ENCODE measurements at regions of chr7 and their contacts with region 1.

Region 1: DNA sequence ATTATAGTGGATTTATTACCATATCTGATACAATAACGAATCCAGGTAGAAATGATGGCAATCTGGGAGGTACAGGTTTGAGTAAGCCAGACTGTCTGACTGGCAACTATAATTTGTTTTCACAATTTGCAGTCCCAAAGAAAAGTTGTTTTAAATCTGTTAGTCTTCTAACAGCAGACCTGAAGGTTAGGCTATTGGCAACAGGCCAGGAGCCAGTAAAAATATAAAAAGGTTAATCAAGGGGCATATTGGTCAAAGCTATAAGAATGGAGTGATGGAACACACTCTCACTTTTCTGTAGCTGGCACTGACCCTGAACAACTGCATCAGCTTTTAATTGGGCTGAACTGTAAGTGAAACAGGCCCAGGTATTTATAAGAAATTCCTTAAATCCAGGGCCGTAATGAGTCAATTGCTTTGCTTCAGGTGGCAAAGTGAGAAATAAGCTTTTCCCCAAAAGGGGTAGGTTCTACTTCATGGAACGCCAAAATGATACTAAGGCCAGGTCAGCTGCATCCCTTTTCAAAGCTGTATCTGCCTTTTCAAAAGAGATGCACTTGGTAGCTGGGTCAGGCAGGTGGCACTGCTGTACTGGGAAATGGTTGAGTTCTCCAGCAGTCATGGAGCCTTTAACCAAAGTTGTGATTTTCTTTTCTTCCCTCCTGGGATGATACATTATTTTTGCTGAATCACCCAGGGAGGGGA is 7.0 kb upstream of the GPR22 start:
- DNase-seq: peak in 1 of 2 experiments; percentile 10
- H3K4me3 ChIP-seq: no peak overlapping the region
- H3K27ac ChIP-seq: no peak overlapping the region
- H3K4me1 ChIP-seq: peaks cover 0 to 6% (median 1%) of the 10 kb centered on the region in 4 experiments; a peak in 3 of 7 replicates
- H3K27me3 ChIP-seq: no peaks in the 10 kb centered on the region
- CTCF ChIP-seq: peak; percentile 61 to 85 (median 72)
- EP300 ChIP-seq: no peak
- POLR2A ChIP-seq: no peak
- RAD21 ChIP-seq: peak; percentile 93 to 94

Region 2: DNA sequence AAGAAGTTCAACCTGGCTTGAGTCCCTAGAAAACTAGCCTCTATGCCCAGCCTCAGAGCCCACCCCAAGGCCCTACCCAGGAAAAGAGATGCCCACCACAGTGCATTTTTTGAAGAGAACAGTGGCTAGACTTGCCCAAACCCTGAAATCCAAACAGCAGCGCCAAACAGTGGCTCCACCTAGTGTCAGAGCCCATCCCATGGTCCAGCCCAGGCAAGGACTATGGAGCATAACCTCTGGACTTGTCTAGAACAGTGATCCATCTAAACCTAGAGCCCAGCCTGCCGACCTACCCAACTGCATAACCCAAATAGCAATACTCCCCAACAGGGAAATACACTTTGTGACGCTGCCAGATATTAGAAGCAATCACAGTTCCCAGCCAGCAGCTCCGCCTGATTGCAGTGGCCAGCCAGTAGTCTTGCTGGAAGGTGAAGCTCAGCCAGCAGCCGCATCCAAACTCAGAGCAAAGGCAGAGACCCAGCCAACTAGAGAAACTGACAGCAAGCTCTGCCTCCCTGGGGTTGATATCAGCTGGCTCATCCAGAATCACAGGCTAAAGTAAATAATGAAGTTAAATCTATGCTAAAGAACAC is 249.6 kb before region 1 on chr7:
- CTCF ChIA-PET with region 1: interaction called, 10 read pairs
- POLR2A ChIA-PET with region 1: no interaction called
- DNase-seq: no peak
- H3K4me3 ChIP-seq: no peak overlapping the region
- H3K27ac ChIP-seq: no peak overlapping the region
- H3K4me1 ChIP-seq: no peaks in the 10 kb centered on the region
- H3K27me3 ChIP-seq: no peaks in the 10 kb centered on the region
- CTCF ChIP-seq: peak; percentile 22 to 50 (median 49); a peak in 3 of 4 replicates
- EP300 ChIP-seq: no peak
- POLR2A ChIP-seq: no peak
- RAD21 ChIP-seq: peak in 1 of 2 experiments; percentile 18; a peak in 1 of 4 replicates

Region 3: DNA sequence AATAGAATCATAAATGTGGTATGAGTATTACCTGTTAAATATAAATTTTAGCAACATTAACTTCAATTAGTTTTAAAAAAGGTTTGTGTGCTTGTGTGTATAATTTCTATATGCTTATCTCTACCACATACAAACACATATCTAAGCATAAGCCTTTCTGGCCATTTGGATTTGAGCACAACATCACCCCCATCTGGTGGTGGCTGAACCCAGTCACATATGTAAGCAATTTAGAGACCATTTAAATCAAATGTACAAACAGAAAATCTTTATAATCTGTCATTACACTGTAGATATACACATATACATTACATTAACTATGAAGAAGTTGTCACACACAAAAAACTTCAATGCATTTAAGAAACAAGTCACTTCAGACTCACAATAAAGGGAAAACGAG is 38.7 kb after region 1 on chr7:
- CTCF ChIA-PET with region 1: interaction called, 16 read pairs
- POLR2A ChIA-PET with region 1: no interaction called
- DNase-seq: no peak
- H3K4me3 ChIP-seq: no peak overlapping the region
- H3K27ac ChIP-seq: no peak overlapping the region
- H3K4me1 ChIP-seq: peaks cover 0 to 3% (median 0%) of the 10 kb centered on the region in 4 experiments; a peak in 1 of 7 replicates
- H3K27me3 ChIP-seq: no peaks in the 10 kb centered on the region
- CTCF ChIP-seq: peak in 2 of 3 experiments; percentile 32 to 47; a peak in 2 of 4 replicates
- EP300 ChIP-seq: no peak
- POLR2A ChIP-seq: no peak
- RAD21 ChIP-seq: peak; percentile 65 to 67

Region 4: DNA sequence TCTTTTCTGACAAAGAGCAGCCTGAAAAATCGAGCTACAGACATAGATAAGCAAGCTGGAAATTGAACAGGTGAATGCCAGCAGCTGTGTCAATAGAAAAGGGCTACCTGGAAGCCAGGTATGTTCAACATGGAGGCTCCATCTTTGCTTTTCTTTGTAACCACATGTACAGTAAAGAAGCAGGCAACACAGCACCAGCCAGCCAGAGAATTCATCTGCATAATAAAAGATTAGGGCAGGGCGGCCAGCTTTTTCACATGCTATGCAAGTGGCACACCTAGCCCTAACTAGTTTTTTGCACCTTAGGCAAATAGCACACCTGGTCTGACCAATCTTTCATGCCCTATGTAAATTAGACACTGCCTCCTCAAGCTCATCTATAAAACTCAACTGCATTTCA is 75.1 kb after region 1 on chr7:
- CTCF ChIA-PET with region 1: no interaction called
- POLR2A ChIA-PET with region 1: no interaction called
- DNase-seq: no peak
- H3K4me3 ChIP-seq: no peak overlapping the region; a peak in 1 of 8 replicates
- H3K27ac ChIP-seq: no peak overlapping the region
- H3K4me1 ChIP-seq: peaks cover 0 to 4% (median 0%) of the 10 kb centered on the region in 4 experiments; a peak in 2 of 7 replicates
- H3K27me3 ChIP-seq: no peaks in the 10 kb centered on the region
- CTCF ChIP-seq: no peak
- EP300 ChIP-seq: no peak
- POLR2A ChIP-seq: no peak
- RAD21 ChIP-seq: no peak

Region 5: GRCh38 chr7:107725151-107725740 is 262.4 kb after region 1 on chr7:
- CTCF ChIA-PET with region 1: interaction called, 19 read pairs
- POLR2A ChIA-PET with region 1: no interaction called
- DNase-seq: no peak
- H3K4me3 ChIP-seq: no peak overlapping the region
- H3K27ac ChIP-seq: no peak overlapping the region
- H3K4me1 ChIP-seq: no peaks in the 10 kb centered on the region
- H3K27me3 ChIP-seq: no peaks in the 10 kb centered on the region
- CTCF ChIP-seq: peak in 2 of 3 experiments; percentile 41 to 53; a peak in 2 of 4 replicates
- EP300 ChIP-seq: no peak
- POLR2A ChIP-seq: no peak
- RAD21 ChIP-seq: peak; percentile 80

Measured in H1 (cell line).